CD8-positive, alpha-beta T cell (primary cell): ENCODE measurements at regions of chr12 and their contacts with region 1.

Region 1: GRCh38 chr12:120317224-120318105 is 10.1 kb downstream of the PLA2G1B start:
- DNase-seq: peak; percentile 99 to 100 (median 100)
- ATAC-seq: peak; percentile 98
- H3K4me3 ChIP-seq: peak overlapping the region; percentile 61 to 65
- H3K4me3 Mint-ChIP-seq: peak overlapping the region; percentile 88
- H3K27ac ChIP-seq: peak overlapping the region; percentile 75 to 86
- H3K27ac Mint-ChIP-seq: peak overlapping the region; percentile 97
- H3K4me1 ChIP-seq: peaks cover 5% of the 10 kb centered on the region
- H3K4me1 Mint-ChIP-seq: peaks cover 13% of the 10 kb centered on the region
- H3K27me3 ChIP-seq: no peaks in the 10 kb centered on the region
- H3K27me3 Mint-ChIP-seq: no peaks in the 10 kb centered on the region
- CTCF ChIP-seq: peak; percentile 58

Region 2: GRCh38 chr12:120116792-120117651 is 200.4 kb before region 1 on chr12:
- CTCF ChIA-PET with region 1: no interaction called
- POLR2A ChIA-PET with region 1: no interaction called
- intact Hi-C with region 1: loop called in 1 of 2 experiments (anchors 2 kb)
- DNase-seq: peak; percentile 95 to 99 (median 97)
- ATAC-seq: peak; percentile 84
- H3K4me3 ChIP-seq: peak overlapping the region; percentile 87 to 90
- H3K4me3 Mint-ChIP-seq: peak overlapping the region; percentile 84
- H3K27ac ChIP-seq: peak overlapping the region; percentile 91 to 95
- H3K27ac Mint-ChIP-seq: peak overlapping the region; percentile 88
- H3K4me1 ChIP-seq: peaks cover 53% of the 10 kb centered on the region
- H3K4me1 Mint-ChIP-seq: peaks cover 73% of the 10 kb centered on the region
- H3K27me3 ChIP-seq: no peaks in the 10 kb centered on the region
- H3K27me3 Mint-ChIP-seq: no peaks in the 10 kb centered on the region
- CTCF ChIP-seq: no peak

Region 3: GRCh38 chr12:120150919-120151525 is 166.4 kb before region 1 on chr12:
- CTCF ChIA-PET with region 1: no interaction called
- POLR2A ChIA-PET with region 1: no interaction called
- intact Hi-C with region 1: no loop called
- DNase-seq: no peak
- ATAC-seq: no peak
- H3K4me3 ChIP-seq: no peak overlapping the region
- H3K4me3 Mint-ChIP-seq: no peak overlapping the region
- H3K27ac ChIP-seq: no peak overlapping the region
- H3K27ac Mint-ChIP-seq: no peak overlapping the region
- H3K4me1 ChIP-seq: no peaks in the 10 kb centered on the region
- H3K4me1 Mint-ChIP-seq: no peaks in the 10 kb centered on the region
- H3K27me3 ChIP-seq: no peaks in the 10 kb centered on the region
- H3K27me3 Mint-ChIP-seq: no peaks in the 10 kb centered on the region
- CTCF ChIP-seq: no peak

Region 4: DNA sequence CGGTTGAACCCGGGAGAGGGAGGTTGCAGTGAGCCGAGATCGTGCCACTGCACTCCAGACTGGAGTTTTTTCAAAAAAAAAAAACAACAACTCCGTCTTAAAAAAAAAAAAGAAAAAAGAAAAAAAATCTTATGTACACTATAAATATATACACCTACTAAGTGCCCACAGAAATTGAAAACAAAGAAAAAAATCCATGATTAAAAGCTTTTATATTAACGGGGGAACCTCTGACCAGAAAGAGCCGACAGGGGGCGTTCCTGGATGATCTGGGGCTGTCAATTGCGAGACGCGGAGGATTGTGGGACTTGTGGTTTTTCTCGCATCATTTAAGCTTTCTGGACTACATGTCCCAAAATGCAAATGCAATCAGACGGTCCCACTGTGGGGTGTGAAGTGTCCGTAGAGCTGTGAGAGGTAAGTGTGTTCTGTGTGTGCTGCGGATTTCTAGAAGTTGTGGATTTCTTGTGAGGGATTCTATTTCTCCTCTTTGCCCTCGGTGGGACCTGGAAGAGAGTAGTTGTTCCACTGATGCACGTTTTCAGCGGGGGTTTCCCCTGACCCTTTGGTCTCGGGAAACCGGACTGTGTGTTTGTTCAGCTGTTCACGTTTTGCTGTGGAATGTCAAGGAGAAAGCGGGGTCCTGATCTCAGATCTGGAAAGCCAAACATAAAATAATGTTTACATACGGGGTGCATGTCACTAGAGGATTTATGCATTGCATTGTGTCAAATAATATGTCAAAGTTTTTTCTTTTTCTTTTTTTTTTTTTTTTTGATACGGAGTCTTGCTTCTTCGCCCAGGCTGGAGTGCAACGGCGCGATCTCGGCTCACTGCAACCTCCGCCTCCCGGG is 15.3 kb before region 1 on chr12 and contains the start of gene SIRT4:
- CTCF ChIA-PET with region 1: interaction called, 24 read pairs
- POLR2A ChIA-PET with region 1: interaction called, 20 read pairs
- intact Hi-C with region 1: loop called (anchors 1 kb)
- DNase-seq: peak; percentile 76 to 97 (median 89)
- ATAC-seq: peak; percentile 99
- H3K4me3 ChIP-seq: peak within 1 kb of the TSS; percentile 76 to 89
- H3K4me3 Mint-ChIP-seq: peak within 1 kb of the TSS; percentile 86
- H3K27ac ChIP-seq: peak within 1 kb of the TSS; percentile 3 to 53
- H3K27ac Mint-ChIP-seq: peak within 1 kb of the TSS; percentile 69
- H3K4me1 ChIP-seq: no peaks in the 10 kb centered on the region
- H3K4me1 Mint-ChIP-seq: peaks cover 8% of the 10 kb centered on the region
- H3K27me3 ChIP-seq: no peaks in the 10 kb centered on the region
- H3K27me3 Mint-ChIP-seq: no peaks in the 10 kb centered on the region
- CTCF ChIP-seq: peak; percentile 89
- total RNA-seq, gene SIRT4: not detected

Region 5: DNA sequence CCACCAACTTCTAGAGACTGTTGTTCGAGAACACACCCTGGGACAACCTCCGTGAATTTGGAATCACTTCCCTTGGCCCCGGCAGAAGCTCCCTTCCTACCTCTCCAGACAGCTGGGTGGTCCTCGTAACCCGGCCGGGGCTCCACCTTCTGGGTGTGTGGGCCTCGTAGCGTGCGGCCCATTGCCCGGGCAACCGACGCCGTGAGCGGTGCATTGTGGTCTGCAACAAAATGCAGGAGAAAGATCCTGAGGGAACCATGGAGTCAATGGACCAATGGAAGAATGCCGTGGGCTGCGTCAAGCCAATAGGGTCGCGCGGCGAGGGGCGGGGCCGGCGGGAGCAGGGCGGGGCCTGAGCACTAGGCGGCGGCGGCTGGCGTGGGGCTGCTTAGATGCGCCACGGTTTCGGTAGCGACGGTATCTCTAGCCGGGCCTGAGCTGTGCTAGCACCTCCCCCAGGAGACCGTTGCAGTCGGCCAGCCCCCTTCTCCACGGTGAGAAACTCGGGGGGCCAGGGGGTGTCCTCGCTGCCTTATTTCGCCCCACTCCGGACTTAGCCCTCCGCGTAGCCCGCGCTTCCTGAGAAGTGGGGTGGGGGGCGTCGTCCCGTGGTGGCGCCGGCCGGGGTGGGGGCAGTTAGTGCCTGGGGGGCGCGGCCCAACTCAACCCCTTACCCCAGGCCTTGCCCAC is 178.4 kb after region 1 on chr12 and contains the start of gene DYNLL1:
- CTCF ChIA-PET with region 1: no interaction called
- POLR2A ChIA-PET with region 1: no interaction called
- intact Hi-C with region 1: loop called in 1 of 2 experiments (anchors 2 kb)
- DNase-seq: peak; percentile 95 to 98 (median 97)
- ATAC-seq: peak; percentile 97
- H3K4me3 ChIP-seq: peak within 1 kb of the TSS; percentile 80 to 96
- H3K4me3 Mint-ChIP-seq: peak within 1 kb of the TSS; percentile 94
- H3K27ac ChIP-seq: peak within 1 kb of the TSS; percentile 79 to 84
- H3K27ac Mint-ChIP-seq: peak within 1 kb of the TSS; percentile 90
- H3K4me1 ChIP-seq: peaks cover 17% of the 10 kb centered on the region
- H3K4me1 Mint-ChIP-seq: peaks cover 32% of the 10 kb centered on the region
- H3K27me3 ChIP-seq: no peaks in the 10 kb centered on the region
- H3K27me3 Mint-ChIP-seq: no peaks in the 10 kb centered on the region
- CTCF ChIP-seq: no peak
- total RNA-seq, gene DYNLL1: 25.9 to 26.1 TPM

Region 6: DNA sequence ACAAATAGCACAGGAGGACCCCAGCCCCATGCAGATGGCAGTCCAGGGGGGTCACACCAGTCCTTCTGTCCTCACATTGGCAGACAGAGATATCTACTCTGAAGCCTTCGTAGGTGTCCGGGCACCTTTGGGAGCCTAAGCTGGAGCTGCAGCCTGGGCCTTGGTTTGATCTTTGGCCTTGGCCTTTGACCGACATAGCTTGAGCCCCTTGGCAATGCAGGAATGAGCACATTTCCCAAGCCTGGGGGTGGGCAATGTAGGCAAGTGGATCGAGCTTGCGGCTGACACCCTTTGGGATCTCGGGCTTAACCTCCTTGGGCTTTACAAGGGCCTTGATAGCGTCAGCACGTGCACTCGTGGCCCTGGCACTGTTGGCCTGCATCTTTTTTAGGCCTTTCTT is 205.1 kb after region 1 on chr12:
- CTCF ChIA-PET with region 1: no interaction called
- POLR2A ChIA-PET with region 1: no interaction called
- intact Hi-C with region 1: no loop called
- DNase-seq: no peak
- ATAC-seq: no peak
- H3K4me3 ChIP-seq: no peak overlapping the region
- H3K4me3 Mint-ChIP-seq: no peak overlapping the region
- H3K27ac ChIP-seq: no peak overlapping the region
- H3K27ac Mint-ChIP-seq: no peak overlapping the region
- H3K4me1 ChIP-seq: no peaks in the 10 kb centered on the region
- H3K4me1 Mint-ChIP-seq: peaks cover 7% of the 10 kb centered on the region
- H3K27me3 ChIP-seq: no peaks in the 10 kb centered on the region
- H3K27me3 Mint-ChIP-seq: no peaks in the 10 kb centered on the region
- CTCF ChIP-seq: no peak

Region 7: GRCh38 chr12:120710031-120710804 is 392.8 kb after region 1 on chr12 and contains the start of gene UNC119B:
- CTCF ChIA-PET with region 1: no interaction called
- POLR2A ChIA-PET with region 1: no interaction called
- intact Hi-C with region 1: loop called (anchors 5 to 10 kb)
- DNase-seq: peak; percentile 38 to 85 (median 77)
- ATAC-seq: peak; percentile 88
- H3K4me3 ChIP-seq: peak within 1 kb of the TSS; percentile 64 to 68
- H3K4me3 Mint-ChIP-seq: peak within 1 kb of the TSS; percentile 93
- H3K27ac ChIP-seq: peak within 1 kb of the TSS; percentile 40 to 70
- H3K27ac Mint-ChIP-seq: peak within 1 kb of the TSS; percentile 89
- H3K4me1 ChIP-seq: peaks cover 22% of the 10 kb centered on the region
- H3K4me1 Mint-ChIP-seq: peaks cover 37% of the 10 kb centered on the region
- H3K27me3 ChIP-seq: no peaks in the 10 kb centered on the region
- H3K27me3 Mint-ChIP-seq: no peaks in the 10 kb centered on the region
- CTCF ChIP-seq: no peak
- total RNA-seq, gene UNC119B: 8.1 to 8.4 TPM

Region 8: DNA sequence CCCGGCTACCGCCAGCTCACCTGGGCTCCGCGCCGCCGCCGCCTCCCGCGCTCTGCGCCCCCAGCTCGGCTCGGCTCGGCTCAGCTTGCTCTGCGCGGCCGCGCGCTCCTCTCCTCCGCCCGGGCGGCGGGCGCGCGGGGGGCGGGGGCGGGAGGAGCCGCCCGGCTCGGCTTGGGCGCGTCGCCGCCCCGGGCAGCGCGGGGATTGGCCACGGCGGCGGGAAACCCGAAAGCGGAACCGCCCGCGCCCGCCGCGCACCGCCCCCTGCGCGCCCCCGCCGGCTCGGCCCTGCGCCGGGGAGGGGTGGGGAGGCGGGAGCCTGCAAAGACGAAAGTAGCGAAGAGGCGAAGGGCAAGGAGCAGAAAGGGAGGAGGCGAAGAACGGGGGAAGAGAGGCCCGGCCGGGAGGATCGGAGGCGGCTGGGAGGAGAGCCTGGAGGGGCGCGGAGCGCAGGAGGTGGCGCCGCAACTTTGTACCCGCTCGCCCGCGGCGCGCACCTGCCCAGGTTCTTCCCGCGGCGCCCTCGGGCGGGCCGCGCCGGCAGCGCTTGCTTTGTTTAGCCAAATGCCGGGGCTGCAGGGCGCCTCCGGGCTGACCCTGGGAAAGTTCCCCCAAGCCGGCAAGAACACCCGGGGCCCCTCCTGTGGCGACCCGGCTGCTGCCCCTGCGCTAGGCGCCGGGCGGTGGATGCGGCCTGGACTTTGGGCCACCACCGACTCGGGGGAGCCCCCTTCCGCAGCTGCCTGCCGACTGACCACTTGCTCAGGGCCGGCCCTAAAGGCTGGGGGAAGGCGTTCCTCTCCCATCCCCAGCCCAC is 979.4 kb after region 1 on chr12 and contains the start of gene CAMKK2:
- CTCF ChIA-PET with region 1: no interaction called
- POLR2A ChIA-PET with region 1: no interaction called
- intact Hi-C with region 1: loop called in 1 of 2 experiments (anchors 10 kb)
- DNase-seq: peak; percentile 77 to 94 (median 85)
- ATAC-seq: peak; percentile 88
- H3K4me3 ChIP-seq: peak within 1 kb of the TSS; percentile 73 to 93
- H3K4me3 Mint-ChIP-seq: peak within 1 kb of the TSS; percentile 87
- H3K27ac ChIP-seq: peak within 1 kb of the TSS; percentile 31 to 59
- H3K27ac Mint-ChIP-seq: peak within 1 kb of the TSS; percentile 80
- H3K4me1 ChIP-seq: peaks cover 15% of the 10 kb centered on the region
- H3K4me1 Mint-ChIP-seq: peaks cover 20% of the 10 kb centered on the region
- H3K27me3 ChIP-seq: no peaks in the 10 kb centered on the region
- H3K27me3 Mint-ChIP-seq: no peaks in the 10 kb centered on the region
- CTCF ChIP-seq: no peak
- total RNA-seq, gene CAMKK2: 3.6 to 4.1 TPM